RWPE1 (cell line): ENCODE measurements at regions of chr5 and their contacts with region 1.

Region 1: DNA sequence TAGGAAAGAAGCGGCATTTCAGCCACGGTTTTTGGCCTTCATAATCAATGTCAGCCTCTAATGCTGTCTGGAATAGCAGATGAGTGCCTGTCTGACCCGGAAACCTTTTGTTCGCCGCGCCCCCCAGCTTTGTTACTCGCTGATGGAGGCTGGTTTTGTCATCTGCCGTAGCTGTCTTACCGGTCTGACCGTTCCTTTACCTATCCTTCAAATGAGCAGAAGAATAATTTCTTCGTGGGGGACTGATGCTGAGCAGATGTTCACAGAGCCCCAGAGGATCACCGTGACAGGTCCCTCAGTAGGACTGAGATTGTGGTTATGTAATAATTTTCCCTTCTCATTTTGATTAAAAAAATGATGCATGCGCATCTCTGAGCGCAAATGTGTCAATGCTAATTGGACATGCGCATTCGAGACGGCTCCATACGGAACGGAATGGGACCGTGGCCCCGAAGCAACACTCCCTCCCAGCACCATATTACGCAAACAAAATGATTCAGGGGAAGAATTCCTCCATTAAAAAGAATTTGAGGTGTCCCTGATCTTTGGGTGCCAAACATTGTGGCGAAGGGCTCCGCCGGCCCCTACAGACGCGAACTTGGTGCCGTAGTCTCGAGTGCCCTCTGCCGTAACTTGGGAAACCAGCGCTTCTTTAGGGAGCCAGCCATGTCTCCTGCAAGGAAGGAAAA is 27.6 kb downstream of the TLX3 start:
- DNase-seq: peak; percentile 55
- H3K27ac ChIP-seq: no peak overlapping the region
- CTCF ChIP-seq: peak; percentile 83

Region 2: DNA sequence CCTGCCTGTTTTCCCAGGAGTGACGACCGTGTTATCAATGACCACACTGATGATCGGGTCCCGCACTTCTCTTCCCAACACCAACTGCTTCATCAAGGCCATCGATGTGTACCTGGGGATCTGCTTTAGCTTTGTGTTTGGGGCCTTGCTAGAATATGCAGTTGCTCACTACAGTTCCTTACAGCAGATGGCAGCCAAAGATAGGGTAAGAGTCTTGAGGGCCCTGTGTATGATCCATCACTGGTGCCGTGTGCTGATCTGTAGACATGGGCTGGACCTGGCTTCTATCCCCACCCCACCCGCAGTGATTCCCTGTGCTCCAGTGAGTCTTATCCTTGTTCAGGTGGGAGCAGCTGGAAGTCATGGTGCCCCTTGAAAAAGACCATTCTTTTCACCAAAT is 527.1 kb before region 1 on chr5:
- CTCF ChIA-PET with region 1: interaction called, 16 read pairs
- POLR2A ChIA-PET with region 1: no interaction called
- DNase-seq: peak; percentile 82
- H3K27ac ChIP-seq: no peak overlapping the region
- CTCF ChIP-seq: 0 out of 2 replicates have a peak, but pooled peaks have one; percentile 13

Region 3: DNA sequence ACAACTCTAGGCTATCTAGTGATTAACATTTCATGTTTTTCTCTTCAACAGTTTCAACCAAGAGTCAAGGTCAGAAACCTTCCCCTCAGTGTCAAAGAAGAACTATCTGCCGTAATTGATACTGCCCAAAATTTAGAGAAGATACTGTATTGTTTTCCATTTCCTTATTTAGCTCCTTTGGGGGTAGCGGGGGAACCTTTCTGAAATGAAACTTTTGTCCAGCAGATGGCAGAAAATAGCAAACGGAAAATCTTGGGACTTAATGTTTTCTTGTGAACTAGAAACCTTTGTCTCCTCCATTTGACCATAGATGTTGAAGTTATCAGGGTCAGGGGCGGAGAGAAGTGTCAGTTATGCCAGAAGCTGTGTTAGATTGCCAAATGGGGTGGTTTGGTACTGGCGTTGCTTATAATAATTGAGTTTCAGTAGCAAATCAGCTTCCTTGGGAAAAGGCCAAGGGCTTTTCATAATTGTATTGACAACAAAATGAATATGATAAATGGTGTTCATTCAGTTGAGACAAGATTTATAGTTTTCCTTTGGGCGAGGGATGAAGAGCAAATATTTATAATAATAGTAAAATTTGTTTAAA is 129.3 kb before region 1 on chr5:
- CTCF ChIA-PET with region 1: interaction called, 52 read pairs
- POLR2A ChIA-PET with region 1: no interaction called
- DNase-seq: peak; percentile 52
- H3K27ac ChIP-seq: no peak overlapping the region
- CTCF ChIP-seq: peak; percentile 69

Region 4: GRCh38 chr5:171351536-171352073 is 14.9 kb after region 1 on chr5:
- CTCF ChIA-PET with region 1: no interaction called
- POLR2A ChIA-PET with region 1: no interaction called
- DNase-seq: no peak
- H3K27ac ChIP-seq: no peak overlapping the region
- CTCF ChIP-seq: no peak